IMR-90 (cell line): ENCODE measurements at regions of chr16 and their contacts with region 1.

Region 1: GRCh38 chr16:74695450-74696422 is 4.9 kb downstream of the MLKL start:
- DNase-seq: peak; percentile 93
- ATAC-seq: peak; percentile 92
- H3K4me3 ChIP-seq: peak overlapping the region; percentile 43
- H3K27ac ChIP-seq: no peak overlapping the region
- H3K4me1 ChIP-seq: peaks cover 3% of the 10 kb centered on the region; the same call in 1 of the 2 replicates
- H3K27me3 ChIP-seq: no peaks in the 10 kb centered on the region
- CTCF ChIP-seq: no peak
- POLR2A ChIP-seq: no peak
- RAD21 ChIP-seq: no peak

Region 2: GRCh38 chr16:74641969-74642368 is 53.8 kb before region 1 on chr16:
- CTCF ChIA-PET with region 1: no interaction called
- POLR2A ChIA-PET with region 1: interaction called, 21 read pairs
- dilution Hi-C with region 1: no loop called
- in situ Hi-C with region 1: no loop called
- intact Hi-C with region 1: no loop called
- DNase-seq: no peak
- ATAC-seq: no peak
- H3K4me3 ChIP-seq: no peak overlapping the region
- H3K27ac ChIP-seq: no peak overlapping the region
- H3K4me1 ChIP-seq: no peaks in the 10 kb centered on the region; the same call in 1 of the 2 replicates
- H3K27me3 ChIP-seq: no peaks in the 10 kb centered on the region
- CTCF ChIP-seq: no peak
- POLR2A ChIP-seq: no peak
- RAD21 ChIP-seq: no peak